B cell (primary cell): ENCODE measurements at regions of chr1 and their contacts with region 1.

Region 1: GRCh38 chr1:167471568-167471967 is 46.8 kb downstream of the CD247 start:
- DNase-seq: no peak
- ATAC-seq: no peak
- H3K4me3 ChIP-seq: no peak overlapping the region
- H3K4me3 Mint-ChIP-seq: no peak overlapping the region
- H3K27ac ChIP-seq: no peak overlapping the region
- H3K27ac Mint-ChIP-seq: no peak overlapping the region
- H3K4me1 ChIP-seq: no peaks in the 10 kb centered on the region
- H3K4me1 Mint-ChIP-seq: no peaks in the 10 kb centered on the region
- H3K27me3 ChIP-seq: peaks cover 0 to 6% (median 2%) of the 10 kb centered on the region in 4 experiments
- H3K27me3 Mint-ChIP-seq: peaks cover 25% of the 10 kb centered on the region
- CTCF ChIP-seq: no peak

Region 2: GRCh38 chr1:167491586-167492461 is 20.3 kb after region 1 on chr1:
- CTCF ChIA-PET with region 1: no interaction called
- POLR2A ChIA-PET with region 1: interaction called, 10 read pairs
- intact Hi-C with region 1: no loop called
- DNase-seq: no peak
- ATAC-seq: no peak
- H3K4me3 ChIP-seq: no peak overlapping the region
- H3K4me3 Mint-ChIP-seq: no peak overlapping the region
- H3K27ac ChIP-seq: no peak overlapping the region
- H3K27ac Mint-ChIP-seq: no peak overlapping the region
- H3K4me1 ChIP-seq: no peaks in the 10 kb centered on the region
- H3K4me1 Mint-ChIP-seq: no peaks in the 10 kb centered on the region
- H3K27me3 ChIP-seq: peaks cover 0 to 33% (median 25%) of the 10 kb centered on the region in 4 experiments
- H3K27me3 Mint-ChIP-seq: peaks cover 47% of the 10 kb centered on the region
- CTCF ChIP-seq: no peak